Right ventricle myocardium inferior (tissue), 1 donor: ENCODE measurements at regions of chr3 and their contacts with region 1.

Region 1: GRCh38 chr3:173584093-173584837 is 186.7 kb downstream of the NLGN1 start:
- DNase-seq: no peak
- ATAC-seq: peak; percentile 44

Region 2: DNA sequence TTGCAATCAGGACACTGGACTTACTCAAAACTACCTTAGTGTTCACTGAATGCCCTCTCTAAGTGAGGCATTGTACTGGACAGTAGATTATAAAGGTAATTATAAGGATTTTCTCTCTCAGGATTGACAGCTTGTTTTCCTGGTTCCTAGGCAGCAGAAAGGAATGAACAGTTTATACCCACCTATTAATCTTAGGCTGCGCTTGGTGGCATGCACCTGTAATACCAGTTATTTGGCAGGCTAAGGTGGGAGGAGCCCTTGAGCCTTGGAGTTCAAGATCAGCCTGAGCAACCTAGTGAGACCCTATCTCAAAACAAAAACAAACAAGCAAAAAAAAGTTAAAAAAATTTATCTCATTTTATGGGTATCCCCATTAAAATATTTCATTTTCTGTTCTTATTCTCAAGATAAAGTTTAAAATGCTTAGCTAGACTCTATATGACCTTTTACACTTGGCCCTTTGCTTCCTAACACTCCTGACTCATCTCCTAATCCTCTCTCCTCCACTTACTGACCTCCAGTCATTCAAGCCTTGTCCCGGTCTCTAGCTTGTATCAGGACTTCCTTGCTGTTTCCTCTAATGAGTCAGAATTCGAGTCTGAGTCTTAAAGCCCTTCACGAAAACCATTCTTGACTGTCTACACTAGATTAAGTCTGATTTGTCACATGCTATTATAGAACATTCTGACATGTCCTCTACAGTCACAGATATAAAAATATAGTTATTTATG is 161.9 kb after region 1 on chr3:
- intact Hi-C with region 1: no loop called
- DNase-seq: no peak
- ATAC-seq: no peak

Region 3: GRCh38 chr3:173913974-173914421 is 329.7 kb after region 1 on chr3:
- intact Hi-C with region 1: loop called (anchors 2 kb)
- DNase-seq: no peak
- ATAC-seq: no peak

Region 4: GRCh38 chr3:174377096-174377495 is 792.8 kb after region 1 on chr3:
- intact Hi-C with region 1: no loop called
- DNase-seq: peak; percentile 67
- ATAC-seq: no peak